ENCODE measurements at regions of chr2 and their contacts with region 1.

Region 1: DNA sequence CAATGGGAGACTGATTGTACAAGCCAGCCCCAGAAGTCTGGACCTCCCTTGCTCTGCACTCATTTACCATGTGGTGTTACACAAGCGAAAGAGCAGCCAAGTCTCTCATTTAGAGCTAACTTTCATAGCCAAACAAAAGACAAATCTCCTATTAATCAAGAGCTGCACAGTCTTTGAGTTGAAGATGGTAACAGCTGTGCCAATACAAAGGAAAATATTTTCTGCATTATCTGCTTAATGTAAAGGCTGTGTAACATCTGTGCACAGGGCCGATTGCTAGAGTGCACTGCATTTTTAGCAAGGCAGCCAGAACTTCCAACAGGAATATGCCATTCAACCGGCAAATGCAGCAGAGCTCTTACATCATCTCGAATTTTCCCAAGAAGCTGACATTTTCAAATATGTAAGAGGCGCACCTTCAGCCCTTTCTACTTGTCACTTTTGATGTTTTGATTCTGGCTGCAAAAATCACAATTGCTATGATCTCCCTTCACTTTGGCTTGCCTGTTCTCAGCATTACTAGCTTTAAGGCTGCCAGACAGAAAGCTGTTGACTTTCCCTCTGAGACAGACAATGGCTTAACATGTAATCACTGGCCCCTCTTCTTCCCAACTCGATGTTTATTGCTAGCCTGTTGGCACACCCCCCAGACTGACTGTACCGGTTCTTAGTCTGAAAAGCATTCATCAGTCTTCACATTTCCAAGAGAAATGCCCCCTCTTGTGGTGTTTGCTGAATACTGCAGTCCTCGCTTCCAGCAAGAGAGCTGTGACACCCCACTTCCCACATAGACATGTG is 96.9 kb upstream of the TANK start:
- DNase-seq: peak; percentile 78
- ATAC-seq: peak; percentile 90
- H3K4me3 Mint-ChIP-seq: no peak overlapping the region
- H3K27ac Mint-ChIP-seq: no peak overlapping the region
- H3K4me1 Mint-ChIP-seq: peaks cover 7% of the 10 kb centered on the region
- H3K27me3 Mint-ChIP-seq: no peaks in the 10 kb centered on the region

Region 2: GRCh38 chr2:159982270-159982669 is 1081.1 kb before region 1 on chr2:
- CTCF ChIA-PET with region 1: no interaction called
- POLR2A ChIA-PET with region 1: no interaction called
- intact Hi-C with region 1: no loop called
- DNase-seq: no peak
- ATAC-seq: no peak
- H3K4me3 Mint-ChIP-seq: no peak overlapping the region
- H3K27ac Mint-ChIP-seq: no peak overlapping the region
- H3K4me1 Mint-ChIP-seq: no peaks in the 10 kb centered on the region
- H3K27me3 Mint-ChIP-seq: peaks cover 13% of the 10 kb centered on the region

Region 3: DNA sequence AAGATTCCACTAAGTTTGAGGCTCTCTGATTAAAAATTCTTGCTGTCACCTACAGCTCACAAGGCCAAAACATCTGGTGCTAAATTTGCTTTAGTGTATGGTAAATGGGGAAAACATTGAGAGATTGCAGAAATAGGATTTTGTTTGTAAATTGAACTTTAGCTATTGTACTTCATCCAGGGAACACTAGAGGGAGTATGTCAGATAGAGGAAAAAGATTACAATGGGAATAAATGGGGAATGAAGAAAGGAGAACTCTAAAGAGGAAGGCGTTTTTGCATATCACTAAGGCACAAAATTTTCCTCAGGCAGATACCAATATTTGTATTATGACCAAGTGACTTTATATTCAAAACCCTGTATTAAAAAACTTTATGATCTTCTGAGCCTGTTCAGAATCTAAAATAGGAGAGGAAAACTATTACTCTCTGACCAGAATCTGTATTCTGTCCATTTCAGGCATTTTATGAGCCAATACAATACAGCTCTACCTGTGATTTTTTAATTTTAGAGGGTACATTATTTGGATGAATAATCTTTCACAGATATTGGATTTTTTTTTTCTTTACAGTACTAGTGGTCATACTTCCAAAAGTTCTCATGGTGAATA is 811.0 kb before region 1 on chr2:
- CTCF ChIA-PET with region 1: interaction called, 10 read pairs
- POLR2A ChIA-PET with region 1: no interaction called
- intact Hi-C with region 1: loop called in 1 of 2 experiments (anchors 5 kb)
- DNase-seq: no peak
- ATAC-seq: no peak
- H3K4me3 Mint-ChIP-seq: no peak overlapping the region
- H3K27ac Mint-ChIP-seq: no peak overlapping the region
- H3K4me1 Mint-ChIP-seq: no peaks in the 10 kb centered on the region
- H3K27me3 Mint-ChIP-seq: no peaks in the 10 kb centered on the region

Region 4: GRCh38 chr2:160859085-160859484 is 204.3 kb before region 1 on chr2:
- CTCF ChIA-PET with region 1: no interaction called
- POLR2A ChIA-PET with region 1: no interaction called
- intact Hi-C with region 1: no loop called
- DNase-seq: no peak
- ATAC-seq: no peak
- H3K4me3 Mint-ChIP-seq: no peak overlapping the region
- H3K27ac Mint-ChIP-seq: no peak overlapping the region
- H3K4me1 Mint-ChIP-seq: peaks cover 6% of the 10 kb centered on the region
- H3K27me3 Mint-ChIP-seq: no peaks in the 10 kb centered on the region

Region 5: GRCh38 chr2:161004379-161004778 is 59.0 kb before region 1 on chr2:
- CTCF ChIA-PET with region 1: interaction called, 10 read pairs
- POLR2A ChIA-PET with region 1: no interaction called
- intact Hi-C with region 1: no loop called
- DNase-seq: no peak
- ATAC-seq: no peak
- H3K4me3 Mint-ChIP-seq: no peak overlapping the region
- H3K27ac Mint-ChIP-seq: no peak overlapping the region
- H3K4me1 Mint-ChIP-seq: no peaks in the 10 kb centered on the region
- H3K27me3 Mint-ChIP-seq: peaks cover 2% of the 10 kb centered on the region

Region 6: GRCh38 chr2:161090411-161090810 is 27.1 kb after region 1 on chr2:
- CTCF ChIA-PET with region 1: interaction called, 16 read pairs
- POLR2A ChIA-PET with region 1: no interaction called
- intact Hi-C with region 1: no loop called
- DNase-seq: peak; percentile 50
- ATAC-seq: peak; percentile 84
- H3K4me3 Mint-ChIP-seq: peak overlapping the region; percentile 29
- H3K27ac Mint-ChIP-seq: peak overlapping the region; percentile 49
- H3K4me1 Mint-ChIP-seq: peaks cover 29% of the 10 kb centered on the region
- H3K27me3 Mint-ChIP-seq: peaks cover 2% of the 10 kb centered on the region

Region 7: GRCh38 chr2:161265874-161266273 is 202.5 kb after region 1 on chr2:
- CTCF ChIA-PET with region 1: interaction called, 3 read pairs
- POLR2A ChIA-PET with region 1: no interaction called
- intact Hi-C with region 1: loop called in 1 of 2 experiments (anchors 10 kb)
- DNase-seq: no peak
- ATAC-seq: no peak
- H3K4me3 Mint-ChIP-seq: no peak overlapping the region
- H3K27ac Mint-ChIP-seq: no peak overlapping the region
- H3K4me1 Mint-ChIP-seq: no peaks in the 10 kb centered on the region
- H3K27me3 Mint-ChIP-seq: peaks cover 6% of the 10 kb centered on the region